PC-3 (cell line): ENCODE measurements at regions of chr22 and their contacts with region 1.

Region 1: DNA sequence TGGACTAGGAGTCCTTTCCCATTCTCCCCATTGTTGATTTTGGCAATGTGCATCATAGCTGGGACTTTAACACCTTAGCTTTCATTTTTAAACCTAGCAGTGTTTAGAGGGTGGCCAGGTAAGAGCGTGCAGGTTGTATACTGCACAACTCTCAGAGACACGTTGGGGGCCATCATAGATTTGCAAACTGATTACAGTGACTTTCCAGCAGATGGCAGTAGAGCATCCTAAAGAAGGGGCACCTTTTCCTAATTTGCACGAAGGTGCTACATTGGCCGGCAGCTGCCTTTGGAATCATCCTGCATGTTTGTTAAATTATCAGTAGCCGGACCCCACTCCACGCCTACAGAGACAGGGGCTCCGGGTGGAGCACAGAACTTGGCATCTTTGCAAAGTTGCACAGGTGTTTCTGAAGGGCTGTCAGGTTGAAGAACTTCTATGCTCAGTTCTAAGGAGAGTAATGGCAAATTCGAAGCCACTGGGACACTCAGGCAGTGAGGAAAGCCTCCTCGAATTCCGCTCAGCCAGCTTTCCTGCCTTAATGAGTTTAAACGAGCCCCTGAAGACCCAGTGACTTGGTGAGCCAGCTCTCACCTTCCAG is 7.7 kb downstream of the LHFPL7 start:
- DNase-seq: peak; percentile 72
- ATAC-seq: peak; percentile 58
- H3K4me3 ChIP-seq: no peak overlapping the region
- H3K27ac ChIP-seq: no peak overlapping the region
- H3K4me1 ChIP-seq: peaks cover 5% of the 10 kb centered on the region; the same call in 1 of the 2 replicates
- H3K27me3 ChIP-seq: no peaks in the 10 kb centered on the region
- CTCF ChIP-seq: peak; percentile 74

Region 2: DNA sequence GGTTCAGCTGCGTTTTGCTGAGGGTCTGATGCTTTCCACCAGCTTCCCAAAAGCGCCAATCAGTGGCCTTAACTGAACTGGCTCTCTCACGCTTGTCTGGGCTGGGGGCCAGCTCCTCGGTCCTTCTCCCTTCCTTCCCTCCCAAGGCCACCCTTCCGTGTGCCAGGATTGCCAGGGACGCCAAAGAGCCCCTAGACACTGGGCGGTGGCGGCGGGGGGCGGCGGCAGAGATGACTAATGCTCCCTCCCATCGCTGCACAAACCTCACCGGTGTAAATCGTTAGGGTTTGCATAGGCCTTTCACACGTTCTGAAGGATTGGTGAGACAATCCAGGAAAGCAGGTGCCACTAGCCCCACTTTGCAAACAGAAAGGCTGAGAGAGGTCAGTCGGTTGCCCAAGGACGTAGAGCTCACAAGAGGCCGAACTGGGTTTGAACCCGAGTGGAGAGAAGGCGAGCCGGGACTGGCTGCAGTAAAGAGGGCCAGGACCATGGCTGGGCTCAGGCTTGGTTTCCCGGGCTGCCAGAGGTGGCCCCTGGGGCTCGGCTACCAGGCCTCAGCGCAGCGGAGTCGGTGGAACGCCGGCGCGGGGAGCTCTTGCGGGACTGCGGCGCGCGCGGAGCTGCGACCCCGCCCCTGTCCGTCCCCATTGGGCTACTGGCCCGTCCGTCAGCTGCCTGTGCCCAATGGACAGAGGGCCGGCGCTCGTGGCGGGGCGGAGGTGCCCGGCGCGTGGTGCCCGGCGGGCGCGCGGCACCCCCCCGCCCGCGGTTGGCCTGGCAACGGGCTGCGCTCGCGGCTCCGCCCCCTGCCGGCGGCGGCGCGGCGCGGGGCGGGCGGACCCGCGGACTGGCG is 1869.1 kb before region 1 on chr22:
- CTCF ChIA-PET with region 1: interaction called, 10 read pairs
- POLR2A ChIA-PET with region 1: no interaction called
- intact Hi-C with region 1: no loop called
- DNase-seq: peak; percentile 82
- ATAC-seq: peak; percentile 95
- H3K4me3 ChIP-seq: peak overlapping the region; percentile 84
- H3K27ac ChIP-seq: no peak overlapping the region
- H3K4me1 ChIP-seq: peaks cover 12% of the 10 kb centered on the region; the same call in 1 of the 2 replicates
- H3K27me3 ChIP-seq: no peaks in the 10 kb centered on the region
- CTCF ChIP-seq: no peak

Region 3: DNA sequence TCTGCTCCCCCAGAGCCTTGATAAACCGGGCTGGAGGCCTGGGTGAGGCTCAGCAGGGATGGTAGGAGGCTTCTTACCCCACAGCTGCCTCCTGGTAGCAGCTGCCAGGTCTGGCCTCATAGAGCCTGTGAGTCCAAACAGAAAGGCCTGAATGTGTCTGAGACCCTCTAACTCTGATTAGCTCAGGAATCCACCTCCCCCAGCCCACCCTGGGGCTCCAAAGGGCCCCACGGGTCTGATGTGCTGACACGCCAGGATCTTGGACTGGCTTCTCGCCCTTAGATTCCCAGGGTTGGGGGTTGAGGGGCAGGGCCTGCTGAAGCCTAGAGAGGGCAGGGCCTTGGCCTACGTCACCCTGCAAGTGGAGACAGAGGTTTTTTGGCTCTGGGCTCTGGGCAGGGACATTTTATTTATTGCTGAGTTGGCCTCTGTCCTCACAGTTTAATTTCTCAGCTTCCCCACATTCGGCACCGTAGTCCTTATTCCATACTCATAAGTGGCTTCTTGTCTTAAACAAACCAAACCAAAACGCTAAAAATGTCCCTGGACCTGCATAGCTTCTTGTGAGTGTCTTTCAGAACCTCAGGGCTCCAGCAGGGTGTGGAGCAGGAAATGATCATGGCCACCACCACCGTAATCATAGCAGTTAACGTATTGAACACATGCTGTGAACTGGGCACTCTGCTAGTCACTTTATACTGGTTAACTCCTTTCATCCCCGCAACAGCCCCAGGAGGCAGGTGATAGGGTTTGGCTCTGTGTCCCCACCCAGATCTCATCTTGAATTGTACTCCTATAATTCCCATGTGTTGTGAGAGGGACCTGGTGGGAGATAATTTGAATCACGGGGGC is 38.8 kb after region 1 on chr22:
- CTCF ChIA-PET with region 1: no interaction called
- POLR2A ChIA-PET with region 1: no interaction called
- intact Hi-C with region 1: no loop called
- DNase-seq: no peak
- ATAC-seq: no peak
- H3K4me3 ChIP-seq: no peak overlapping the region
- H3K27ac ChIP-seq: no peak overlapping the region
- H3K4me1 ChIP-seq: no peaks in the 10 kb centered on the region
- H3K27me3 ChIP-seq: no peaks in the 10 kb centered on the region
- CTCF ChIP-seq: no peak

Region 4: DNA sequence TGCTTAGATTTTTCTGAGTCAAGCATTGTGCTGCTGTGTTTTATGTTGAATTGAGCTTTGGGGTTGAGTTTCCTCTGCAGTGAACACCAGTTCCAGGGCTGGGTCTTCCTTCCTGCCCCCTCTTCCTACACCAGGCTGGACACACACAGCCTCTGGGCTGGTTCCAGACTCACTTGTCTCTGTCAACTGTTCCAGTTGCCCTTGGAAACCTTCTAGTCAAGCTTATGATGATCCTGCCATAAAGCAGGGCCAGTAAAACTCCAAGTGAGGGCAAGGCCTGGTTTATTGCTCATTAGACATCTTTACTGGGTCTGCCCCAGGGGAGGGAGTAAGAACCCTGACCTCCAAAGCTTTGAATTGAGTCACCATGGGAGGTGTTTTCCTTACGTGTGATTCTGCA is 74.8 kb after region 1 on chr22:
- CTCF ChIA-PET with region 1: no interaction called
- POLR2A ChIA-PET with region 1: no interaction called
- intact Hi-C with region 1: no loop called
- DNase-seq: peak; percentile 68
- ATAC-seq: peak; percentile 87
- H3K4me3 ChIP-seq: no peak overlapping the region
- H3K27ac ChIP-seq: peak overlapping the region; percentile 61
- H3K4me1 ChIP-seq: peaks cover 18% of the 10 kb centered on the region
- H3K27me3 ChIP-seq: no peaks in the 10 kb centered on the region
- CTCF ChIP-seq: no peak

Region 5: GRCh38 chr22:25057013-25057881 is 118.4 kb after region 1 on chr22:
- CTCF ChIA-PET with region 1: interaction called, 4 read pairs
- POLR2A ChIA-PET with region 1: interaction called, 4 read pairs
- intact Hi-C with region 1: loop called (anchors 1 kb)
- DNase-seq: peak; percentile 79
- ATAC-seq: peak; percentile 89
- H3K4me3 ChIP-seq: no peak overlapping the region
- H3K27ac ChIP-seq: no peak overlapping the region
- H3K4me1 ChIP-seq: peaks cover 5% of the 10 kb centered on the region
- H3K27me3 ChIP-seq: no peaks in the 10 kb centered on the region
- CTCF ChIP-seq: peak; percentile 80